MCF 10A (cell line): ENCODE measurements at regions of chr1 and their contacts with region 1.

Region 1: DNA sequence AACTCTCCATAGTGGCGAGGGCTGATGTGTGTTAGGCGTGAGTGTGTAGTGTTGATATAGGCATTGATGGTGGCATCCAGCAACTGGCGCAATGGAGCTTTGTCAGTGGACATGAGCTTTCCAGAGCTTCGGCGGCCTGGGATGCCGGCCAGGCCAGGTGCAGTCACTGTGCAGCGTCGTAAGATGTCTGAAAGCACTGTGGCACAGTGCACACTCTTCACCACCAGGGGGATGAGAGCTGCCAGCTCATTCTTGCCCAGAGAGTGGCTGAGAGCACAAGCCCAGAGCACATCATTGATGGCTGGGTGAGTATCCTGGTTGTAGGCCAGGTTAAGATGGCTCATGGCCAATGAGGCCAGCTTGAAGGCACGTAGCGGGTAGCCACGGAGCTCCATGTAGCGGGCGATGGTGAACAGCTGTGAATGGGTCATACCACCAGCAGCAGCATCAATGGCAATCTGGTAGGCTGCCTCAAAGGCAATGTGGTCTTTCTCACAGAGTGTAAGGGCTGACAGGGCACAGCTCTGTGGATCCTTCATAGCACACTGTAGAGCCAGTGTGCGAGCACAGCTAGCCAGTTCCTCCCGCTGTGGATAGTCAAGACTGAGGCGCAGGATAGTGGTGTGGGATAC is 6.7 kb downstream of the UROD start:
- DNase-seq: peak; percentile 81
- H3K4me3 Mint-ChIP-seq: no peak overlapping the region
- H3K27ac Mint-ChIP-seq: no peak overlapping the region
- H3K4me1 Mint-ChIP-seq: peaks cover 19% of the 10 kb centered on the region
- H3K27me3 Mint-ChIP-seq: no peaks in the 10 kb centered on the region
- CTCF ChIP-seq: peak; percentile 73

Region 2: DNA sequence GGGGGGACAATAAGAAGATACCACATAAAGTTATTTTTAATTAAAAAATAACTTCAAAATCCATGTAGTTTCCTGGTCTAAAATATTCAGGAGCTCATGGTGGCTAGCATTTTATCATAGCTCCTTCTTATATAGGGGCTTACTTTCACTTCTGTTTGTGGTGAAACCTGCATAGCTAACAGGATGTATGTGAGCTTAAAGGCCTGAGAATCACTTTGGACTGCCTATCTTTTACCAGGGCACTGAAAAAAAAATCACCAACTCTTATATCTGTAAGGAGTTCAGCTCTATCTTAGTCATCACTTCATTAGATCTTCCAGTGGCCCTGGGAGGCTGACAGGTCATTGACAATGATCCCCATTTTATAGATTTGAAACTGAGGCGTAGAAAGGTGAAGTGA is 14.6 kb after region 1 on chr1:
- CTCF ChIA-PET with region 1: interaction called, 10 read pairs
- POLR2A ChIA-PET with region 1: no interaction called
- intact Hi-C with region 1: no loop called
- DNase-seq: no peak
- H3K4me3 Mint-ChIP-seq: no peak overlapping the region
- H3K27ac Mint-ChIP-seq: no peak overlapping the region
- H3K4me1 Mint-ChIP-seq: no peaks in the 10 kb centered on the region
- H3K27me3 Mint-ChIP-seq: no peaks in the 10 kb centered on the region
- CTCF ChIP-seq: no peak

Region 3: DNA sequence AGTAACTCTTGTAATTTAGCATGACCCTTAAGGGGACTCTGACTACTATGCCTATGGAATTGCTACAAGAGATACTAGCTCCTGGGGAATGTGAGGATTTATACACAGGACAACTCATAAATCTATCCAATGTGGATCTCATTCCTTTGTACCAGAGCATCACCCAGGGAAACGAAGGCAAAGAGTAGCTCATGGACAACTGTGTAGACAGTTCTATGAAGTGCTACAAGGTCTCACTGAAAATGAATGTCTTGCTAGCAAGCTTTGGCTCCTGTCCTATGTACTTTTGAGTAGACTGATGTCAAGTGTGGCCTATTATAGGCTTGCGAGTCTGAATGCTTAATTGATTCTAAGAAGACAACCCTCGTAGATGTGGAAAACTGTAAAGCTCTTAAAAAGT is 93.9 kb after region 1 on chr1:
- CTCF ChIA-PET with region 1: no interaction called
- POLR2A ChIA-PET with region 1: no interaction called
- intact Hi-C with region 1: no loop called
- DNase-seq: no peak
- H3K4me3 Mint-ChIP-seq: no peak overlapping the region
- H3K27ac Mint-ChIP-seq: no peak overlapping the region
- H3K4me1 Mint-ChIP-seq: no peaks in the 10 kb centered on the region
- H3K27me3 Mint-ChIP-seq: peaks cover 47% of the 10 kb centered on the region
- CTCF ChIP-seq: no peak

Region 4: GRCh38 chr1:45230540-45230939 is 211.8 kb after region 1 on chr1:
- CTCF ChIA-PET with region 1: interaction called, 26 read pairs
- POLR2A ChIA-PET with region 1: no interaction called
- intact Hi-C with region 1: no loop called
- DNase-seq: peak; percentile 50
- H3K4me3 Mint-ChIP-seq: no peak overlapping the region
- H3K27ac Mint-ChIP-seq: no peak overlapping the region
- H3K4me1 Mint-ChIP-seq: no peaks in the 10 kb centered on the region
- H3K27me3 Mint-ChIP-seq: no peaks in the 10 kb centered on the region
- CTCF ChIP-seq: no peak

Region 5: DNA sequence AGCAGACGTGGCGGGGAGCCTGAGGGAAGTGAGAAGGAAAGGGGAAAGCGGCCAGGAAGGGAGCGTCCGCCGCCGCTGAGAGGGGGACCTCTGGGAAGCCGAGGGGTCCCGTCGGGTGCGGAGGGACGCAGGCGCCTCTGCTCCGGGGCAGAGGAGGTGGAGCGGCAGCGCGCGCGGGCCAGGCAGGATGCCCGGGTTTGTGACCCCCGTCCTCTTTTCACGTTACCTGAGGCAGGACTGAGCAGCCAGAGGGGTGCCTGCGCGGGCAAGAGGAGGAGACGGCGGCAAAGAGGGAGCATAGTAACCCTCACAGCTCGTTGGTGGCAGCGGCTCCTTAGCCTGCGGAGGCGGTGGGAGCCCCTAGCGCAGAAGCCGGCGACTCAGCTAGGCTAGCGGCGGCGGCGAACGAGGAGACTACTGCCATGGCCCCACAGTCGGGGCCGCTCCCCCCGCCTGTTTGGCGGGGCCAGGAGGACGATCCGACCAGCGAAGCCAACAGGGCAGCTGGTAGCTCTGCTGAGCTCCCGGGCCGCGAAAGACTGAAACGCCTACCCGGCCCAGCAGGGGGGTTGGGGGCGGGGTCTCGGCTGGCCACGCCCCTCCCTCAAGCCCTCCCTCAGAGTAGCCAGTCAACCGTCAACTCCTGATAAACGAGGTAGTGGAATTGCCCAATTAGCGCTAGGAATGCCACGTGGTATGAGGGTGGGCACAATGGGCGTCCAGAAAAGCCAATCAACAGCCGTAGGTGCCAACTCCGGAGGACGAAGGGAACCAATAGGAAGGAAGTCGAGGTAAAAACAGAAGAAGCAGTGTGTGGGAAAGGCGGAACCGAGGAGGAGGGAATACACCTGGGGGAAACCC is 472.1 kb after region 1 on chr1 and contains the start of gene TESK2:
- CTCF ChIA-PET with region 1: interaction called, 55 read pairs
- POLR2A ChIA-PET with region 1: interaction called, 47 read pairs
- intact Hi-C with region 1: loop called (anchors 1 kb)
- DNase-seq: peak; percentile 100
- H3K4me3 Mint-ChIP-seq: no peak within 1 kb of the TSS
- H3K27ac Mint-ChIP-seq: no peak within 1 kb of the TSS
- H3K4me1 Mint-ChIP-seq: peaks cover 5% of the 10 kb centered on the region
- H3K27me3 Mint-ChIP-seq: no peaks in the 10 kb centered on the region
- CTCF ChIP-seq: no peak
- total RNA-seq, gene TESK2: 0.71 and 1.4 TPM in 2 replicates